ENCODE measurements at regions of chr1 and their contacts with region 1.

Region 1: GRCh38 chr1:202462342-202463076 is 114.0 kb downstream of the PPP1R12B start:
- DNase-seq: no peak
- H3K4me3 Mint-ChIP-seq: no peak overlapping the region
- H3K27ac Mint-ChIP-seq: no peak overlapping the region
- H3K4me1 Mint-ChIP-seq: no peaks in the 10 kb centered on the region
- H3K27me3 Mint-ChIP-seq: no peaks in the 10 kb centered on the region

Region 2: GRCh38 chr1:202571347-202572339 is 109.1 kb after region 1 on chr1:
- CTCF ChIA-PET with region 1: interaction called, 17 read pairs
- POLR2A ChIA-PET with region 1: no interaction called
- intact Hi-C with region 1: loop called (anchors 10 kb)
- DNase-seq: peak; percentile 40
- H3K4me3 Mint-ChIP-seq: no peak overlapping the region
- H3K27ac Mint-ChIP-seq: no peak overlapping the region
- H3K4me1 Mint-ChIP-seq: no peaks in the 10 kb centered on the region
- H3K27me3 Mint-ChIP-seq: no peaks in the 10 kb centered on the region

Region 3: GRCh38 chr1:202599677-202600431 is 137.3 kb after region 1 on chr1:
- CTCF ChIA-PET with region 1: interaction called, 3 read pairs
- POLR2A ChIA-PET with region 1: no interaction called
- intact Hi-C with region 1: loop called (anchors 10 kb)
- DNase-seq: peak; percentile 60
- H3K4me3 Mint-ChIP-seq: no peak overlapping the region
- H3K27ac Mint-ChIP-seq: no peak overlapping the region
- H3K4me1 Mint-ChIP-seq: no peaks in the 10 kb centered on the region
- H3K27me3 Mint-ChIP-seq: no peaks in the 10 kb centered on the region

Region 4: GRCh38 chr1:202716654-202717053 is 254.1 kb after region 1 on chr1:
- CTCF ChIA-PET with region 1: interaction called, 23 read pairs
- POLR2A ChIA-PET with region 1: no interaction called
- intact Hi-C with region 1: loop called (anchors 5 kb)
- DNase-seq: no peak
- H3K4me3 Mint-ChIP-seq: no peak overlapping the region
- H3K27ac Mint-ChIP-seq: no peak overlapping the region
- H3K4me1 Mint-ChIP-seq: peaks cover 2% of the 10 kb centered on the region
- H3K27me3 Mint-ChIP-seq: peaks cover 14% of the 10 kb centered on the region